ENCODE measurements at regions of chr16 and their contacts with region 1.

Region 1: DNA sequence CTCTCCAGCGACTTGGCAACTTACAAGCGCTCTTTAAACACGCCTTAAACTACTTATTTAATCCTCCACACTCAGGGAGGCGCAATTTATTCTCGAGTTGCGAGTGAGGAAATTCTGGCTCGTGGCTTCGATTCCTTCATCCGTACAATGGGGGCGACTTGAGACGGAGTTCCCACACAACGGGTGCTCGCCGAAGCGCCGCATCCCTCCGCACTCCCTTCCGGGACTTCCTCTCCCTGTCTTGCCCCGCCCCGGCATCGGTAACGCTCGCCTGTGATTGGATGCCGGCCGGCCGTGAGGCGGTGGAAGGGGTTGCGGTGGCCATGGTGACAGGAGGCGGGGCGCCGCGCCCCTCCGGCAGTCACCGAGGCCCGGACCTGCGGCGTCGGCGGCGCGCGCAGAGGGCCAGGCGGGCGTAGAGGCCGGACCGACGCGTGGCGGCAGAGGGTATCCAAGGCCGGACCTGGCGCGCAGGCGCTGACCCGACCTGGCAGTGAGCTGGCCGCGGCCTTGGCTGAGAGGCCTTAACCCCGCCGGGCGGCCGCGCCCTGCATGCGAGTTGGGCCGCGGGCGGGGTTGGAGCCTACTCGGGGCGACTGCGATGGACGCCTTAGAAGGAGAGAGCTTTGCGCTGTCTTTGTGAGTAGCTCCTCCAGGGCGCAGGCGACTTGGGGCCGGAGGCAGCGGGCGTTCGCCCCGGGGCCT is at the start of gene ARL2BP:
- DNase-seq: peak; percentile 96
- ATAC-seq: peak; percentile 96
- H3K4me3 ChIP-seq: peak within 1 kb of the TSS; percentile 77 to 89 (median 81)
- H3K27ac ChIP-seq: peak within 1 kb of the TSS; percentile 91
- H3K4me1 ChIP-seq: peaks cover 40% of the 10 kb centered on the region
- H3K27me3 ChIP-seq: no peaks in the 10 kb centered on the region
- CTCF ChIP-seq: no peak; the same call in none of the 2 replicates
- EP300 ChIP-seq: 0 out of 4 replicates have a peak, but pooled peaks of 1 of the 2 experiments have one; percentile 7
- POLR2A ChIP-seq: peak; percentile 82 to 84
- RAD21 ChIP-seq: peak; percentile 79
- total RNA-seq, gene ARL2BP: 67.6 and 97.1 TPM in 2 replicates

Region 2: GRCh38 chr16:57260294-57260929 is 15.5 kb after region 1 on chr16:
- CTCF ChIA-PET with region 1: no interaction called
- POLR2A ChIA-PET with region 1: interaction called, 10 read pairs
- in situ Hi-C with region 1: no loop called
- intact Hi-C with region 1: no loop called
- DNase-seq: no peak
- ATAC-seq: no peak
- H3K4me3 ChIP-seq: no peak overlapping the region
- H3K27ac ChIP-seq: peak overlapping the region; percentile 19
- H3K4me1 ChIP-seq: no peaks in the 10 kb centered on the region
- H3K27me3 ChIP-seq: no peaks in the 10 kb centered on the region
- CTCF ChIP-seq: no peak
- EP300 ChIP-seq: no peak
- POLR2A ChIP-seq: no peak
- RAD21 ChIP-seq: no peak

Region 3: GRCh38 chr16:57284208-57284951 is 39.5 kb after region 1 on chr16 and contains the start of gene PLLP:
- CTCF ChIA-PET with region 1: no interaction called
- POLR2A ChIA-PET with region 1: interaction called, 20 read pairs
- in situ Hi-C with region 1: no loop called
- intact Hi-C with region 1: loop called (anchors 1 kb)
- DNase-seq: no peak
- ATAC-seq: peak; percentile 68
- H3K4me3 ChIP-seq: peak within 1 kb of the TSS; percentile 75 to 91 (median 78)
- H3K27ac ChIP-seq: peak within 1 kb of the TSS; percentile 76
- H3K4me1 ChIP-seq: peaks cover 86% of the 10 kb centered on the region
- H3K27me3 ChIP-seq: peaks cover 1 to 6% of the 10 kb centered on the region in 2 experiments; a peak in 1 of 5 replicates
- CTCF ChIP-seq: no peak; the same call in 1 of the 2 replicates
- EP300 ChIP-seq: no peak
- POLR2A ChIP-seq: peak; percentile 52 to 91; a peak in 3 of 4 replicates
- RAD21 ChIP-seq: peak; percentile 61
- total RNA-seq, gene PLLP: 39.5 and 60.6 TPM in 2 replicates

Measured in HepG2 (cell line).